ENCODE measurements at regions of chr7 and their contacts with region 1.

Region 1: GRCh38 chr7:7103343-7104313 is 78.7 kb upstream of the C1GALT1 start:
- DNase-seq: peak; percentile 77
- ATAC-seq: peak; percentile 69
- H3K4me3 ChIP-seq: no peak overlapping the region
- H3K4me3 Mint-ChIP-seq: no peak overlapping the region
- H3K27ac ChIP-seq: no peak overlapping the region
- H3K27ac Mint-ChIP-seq: peak overlapping the region; percentile 23
- H3K4me1 ChIP-seq: no peaks in the 10 kb centered on the region
- H3K4me1 Mint-ChIP-seq: peaks cover 5% of the 10 kb centered on the region
- H3K27me3 ChIP-seq: no peaks in the 10 kb centered on the region
- H3K27me3 Mint-ChIP-seq: peaks cover 6% of the 10 kb centered on the region
- CTCF ChIP-seq: peak; percentile 81

Region 2: DNA sequence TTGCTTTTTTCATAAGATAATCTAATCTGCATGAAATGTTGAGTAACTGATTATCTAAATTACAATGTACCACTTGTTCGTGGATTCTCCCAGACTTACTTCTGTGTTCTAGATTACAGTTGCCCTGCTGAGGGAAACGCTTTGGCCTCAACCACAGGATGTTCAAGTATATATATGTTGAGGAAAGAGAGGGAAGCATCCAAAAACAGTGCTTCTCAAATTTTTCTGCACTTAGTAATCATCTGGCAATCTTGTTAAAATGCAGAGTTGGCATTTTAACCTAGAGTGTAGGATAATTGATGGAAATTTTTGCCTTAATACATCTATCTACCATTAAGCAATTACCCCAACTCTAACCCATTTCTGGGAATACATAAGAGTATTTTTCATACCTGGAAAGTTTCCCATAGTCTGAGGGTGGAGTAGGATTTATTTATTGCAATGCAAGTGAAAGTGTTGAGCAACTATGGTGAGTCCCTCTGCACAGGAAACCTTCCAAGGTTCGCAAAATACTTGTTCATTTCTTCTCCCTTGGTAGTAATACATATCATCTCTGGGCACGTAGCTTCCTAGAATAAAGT is 19.2 kb after region 1 on chr7:
- CTCF ChIA-PET with region 1: interaction called, 12 read pairs
- POLR2A ChIA-PET with region 1: no interaction called
- intact Hi-C with region 1: no loop called
- DNase-seq: no peak
- ATAC-seq: no peak
- H3K4me3 ChIP-seq: no peak overlapping the region
- H3K4me3 Mint-ChIP-seq: no peak overlapping the region
- H3K27ac ChIP-seq: no peak overlapping the region
- H3K27ac Mint-ChIP-seq: no peak overlapping the region
- H3K4me1 ChIP-seq: no peaks in the 10 kb centered on the region
- H3K4me1 Mint-ChIP-seq: peaks cover 4% of the 10 kb centered on the region
- H3K27me3 ChIP-seq: no peaks in the 10 kb centered on the region
- H3K27me3 Mint-ChIP-seq: no peaks in the 10 kb centered on the region
- CTCF ChIP-seq: no peak

Region 3: DNA sequence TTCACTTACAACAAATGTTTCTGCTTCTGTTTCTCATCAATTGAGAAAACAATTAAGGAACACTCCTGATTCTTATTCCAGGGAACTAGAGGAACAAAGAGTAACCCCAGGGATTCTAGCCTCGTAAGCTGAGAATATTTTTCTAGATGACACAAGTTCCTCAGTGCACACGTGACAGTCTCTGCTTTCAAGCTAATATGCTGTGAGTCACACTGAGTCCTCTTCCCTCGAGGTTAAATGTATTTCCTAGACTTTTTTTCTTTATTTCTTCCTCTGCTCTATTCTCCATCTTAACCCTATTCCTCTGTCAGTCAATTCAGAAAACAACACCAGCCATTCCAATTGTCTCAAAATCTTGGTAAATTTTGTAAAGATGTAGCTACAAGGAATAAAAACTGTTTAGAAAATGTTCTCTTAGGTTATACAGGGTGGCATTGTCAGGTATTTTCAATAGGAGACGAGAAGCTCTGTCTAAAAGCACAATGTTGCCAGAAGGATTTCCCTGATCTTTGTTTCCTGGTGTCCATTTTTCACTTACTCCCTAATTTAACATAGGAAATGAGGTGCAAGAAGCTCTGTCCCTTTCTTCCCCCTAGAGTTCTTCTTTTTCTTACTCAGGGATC is 72.9 kb after region 1 on chr7:
- CTCF ChIA-PET with region 1: interaction called, 94 read pairs
- POLR2A ChIA-PET with region 1: interaction called, 4 read pairs
- intact Hi-C with region 1: no loop called
- DNase-seq: no peak
- ATAC-seq: peak; percentile 41
- H3K4me3 ChIP-seq: no peak overlapping the region
- H3K4me3 Mint-ChIP-seq: no peak overlapping the region
- H3K27ac ChIP-seq: peak overlapping the region in 1 of 2 donors; percentile 54
- H3K27ac Mint-ChIP-seq: peak overlapping the region; percentile 60
- H3K4me1 ChIP-seq: peaks cover 6 to 18% of the 10 kb centered on the region in 2 donors
- H3K4me1 Mint-ChIP-seq: peaks cover 37% of the 10 kb centered on the region
- H3K27me3 ChIP-seq: no peaks in the 10 kb centered on the region
- H3K27me3 Mint-ChIP-seq: no peaks in the 10 kb centered on the region
- CTCF ChIP-seq: no peak

Region 4: GRCh38 chr7:7424151-7424873 is 320.7 kb after region 1 on chr7:
- CTCF ChIA-PET with region 1: interaction called, 14 read pairs
- POLR2A ChIA-PET with region 1: no interaction called
- intact Hi-C with region 1: loop called (anchors 1 kb)
- DNase-seq: peak; percentile 61
- ATAC-seq: peak; percentile 68
- H3K4me3 ChIP-seq: peak overlapping the region; percentile 36 to 66 (median 51)
- H3K4me3 Mint-ChIP-seq: peak overlapping the region; percentile 92
- H3K27ac ChIP-seq: peak overlapping the region in 1 of 2 donors; percentile 28
- H3K27ac Mint-ChIP-seq: peak overlapping the region; percentile 64
- H3K4me1 ChIP-seq: no peaks in the 10 kb centered on the region
- H3K4me1 Mint-ChIP-seq: peaks cover 10% of the 10 kb centered on the region
- H3K27me3 ChIP-seq: no peaks in the 10 kb centered on the region
- H3K27me3 Mint-ChIP-seq: no peaks in the 10 kb centered on the region
- CTCF ChIP-seq: peak; percentile 58

Region 5: DNA sequence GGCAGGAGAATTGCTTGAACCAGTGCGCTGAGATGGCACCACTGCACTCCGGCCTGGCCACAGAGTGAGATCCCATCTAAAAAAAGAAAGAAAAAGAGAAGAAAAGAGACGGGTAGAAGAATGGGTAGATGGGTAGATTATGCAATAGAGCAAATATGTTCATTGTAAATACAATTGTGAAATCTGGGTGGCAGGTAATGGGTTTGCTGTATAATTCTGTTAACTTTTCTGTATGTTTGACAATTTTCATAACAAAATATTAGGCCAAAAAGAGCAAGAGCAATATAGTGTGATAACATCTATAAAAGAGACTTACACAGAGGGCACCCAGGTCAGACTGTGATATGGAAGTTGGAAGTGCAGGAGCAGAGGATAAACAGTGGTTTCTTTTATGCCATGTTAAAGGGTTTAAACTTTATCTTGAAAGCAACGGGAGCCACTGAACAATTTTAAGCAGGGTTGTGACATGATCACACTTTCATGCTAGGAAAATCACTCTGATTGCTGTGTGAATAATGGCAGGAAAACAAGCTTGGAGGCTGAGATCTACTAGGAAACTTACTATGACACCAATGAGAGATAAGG is 438.7 kb after region 1 on chr7:
- CTCF ChIA-PET with region 1: interaction called, 115 read pairs
- POLR2A ChIA-PET with region 1: no interaction called
- intact Hi-C with region 1: loop called (anchors 2 kb)
- DNase-seq: no peak
- ATAC-seq: no peak
- H3K4me3 ChIP-seq: no peak overlapping the region
- H3K4me3 Mint-ChIP-seq: no peak overlapping the region
- H3K27ac ChIP-seq: no peak overlapping the region
- H3K27ac Mint-ChIP-seq: no peak overlapping the region
- H3K4me1 ChIP-seq: no peaks in the 10 kb centered on the region
- H3K4me1 Mint-ChIP-seq: no peaks in the 10 kb centered on the region
- H3K27me3 ChIP-seq: no peaks in the 10 kb centered on the region
- H3K27me3 Mint-ChIP-seq: no peaks in the 10 kb centered on the region
- CTCF ChIP-seq: no peak

Region 6: GRCh38 chr7:8190119-8190895 is 1086.7 kb after region 1 on chr7:
- CTCF ChIA-PET with region 1: interaction called, 13 read pairs
- POLR2A ChIA-PET with region 1: no interaction called
- intact Hi-C with region 1: no loop called
- DNase-seq: peak; percentile 78
- ATAC-seq: peak; percentile 73
- H3K4me3 ChIP-seq: no peak overlapping the region
- H3K4me3 Mint-ChIP-seq: no peak overlapping the region
- H3K27ac ChIP-seq: no peak overlapping the region
- H3K27ac Mint-ChIP-seq: no peak overlapping the region
- H3K4me1 ChIP-seq: peaks cover 17 to 18% of the 10 kb centered on the region in 2 donors
- H3K4me1 Mint-ChIP-seq: peaks cover 18% of the 10 kb centered on the region
- H3K27me3 ChIP-seq: no peaks in the 10 kb centered on the region
- H3K27me3 Mint-ChIP-seq: no peaks in the 10 kb centered on the region
- CTCF ChIP-seq: peak; percentile 91